Posterior cingulate gyrus (tissue), 11 donors: ENCODE measurements at regions of chr15 and their contacts with region 1.

Region 1: GRCh38 chr15:31427411-31427810 is 100.8 kb downstream of the KLF13 start:
- DNase-seq: no peak

Region 2: GRCh38 chr15:31317421-31318327 is 109.7 kb before region 1 on chr15:
- intact Hi-C with region 1: no loop called
- DNase-seq: peak in 3 of 10 donors; percentile 27 to 73 (median 46)

Region 3: GRCh38 chr15:31402511-31403056 is 24.8 kb before region 1 on chr15:
- intact Hi-C with region 1: loop called (anchors 2 kb)
- DNase-seq: peak in 1 of 10 donors; percentile 71